ENCODE measurements at regions of chr20 and their contacts with region 1.

Region 1: GRCh38 chr20:58179432-58180099 is 48.9 kb downstream of the ANKRD60 start:
- DNase-seq: peak; percentile 20 to 90 (median 61)
- ATAC-seq: peak; percentile 88 to 96 (median 92)
- H3K4me3 ChIP-seq: peak overlapping the region in 1 of 4 donors; percentile 33
- H3K27ac ChIP-seq: no peak overlapping the region
- H3K4me1 ChIP-seq: peaks cover 0 to 8% (median 0%) of the 10 kb centered on the region in 3 donors
- H3K27me3 ChIP-seq: no peaks in the 10 kb centered on the region
- CTCF ChIP-seq: peak; percentile 98 to 99 (median 98)

Region 2: GRCh38 chr20:57622579-57623377 is 556.8 kb before region 1 on chr20:
- intact Hi-C with region 1: loop called in 1 of 3 experiments (anchors 10 kb)
- DNase-seq: peak in 5 of 6 donors; percentile 27 to 84 (median 62)
- ATAC-seq: peak; percentile 58 to 86 (median 76)
- H3K4me3 ChIP-seq: no peak overlapping the region
- H3K27ac ChIP-seq: no peak overlapping the region
- H3K4me1 ChIP-seq: no peaks in the 10 kb centered on the region
- H3K27me3 ChIP-seq: no peaks in the 10 kb centered on the region
- CTCF ChIP-seq: peak; percentile 46 to 74 (median 67)

Region 3: DNA sequence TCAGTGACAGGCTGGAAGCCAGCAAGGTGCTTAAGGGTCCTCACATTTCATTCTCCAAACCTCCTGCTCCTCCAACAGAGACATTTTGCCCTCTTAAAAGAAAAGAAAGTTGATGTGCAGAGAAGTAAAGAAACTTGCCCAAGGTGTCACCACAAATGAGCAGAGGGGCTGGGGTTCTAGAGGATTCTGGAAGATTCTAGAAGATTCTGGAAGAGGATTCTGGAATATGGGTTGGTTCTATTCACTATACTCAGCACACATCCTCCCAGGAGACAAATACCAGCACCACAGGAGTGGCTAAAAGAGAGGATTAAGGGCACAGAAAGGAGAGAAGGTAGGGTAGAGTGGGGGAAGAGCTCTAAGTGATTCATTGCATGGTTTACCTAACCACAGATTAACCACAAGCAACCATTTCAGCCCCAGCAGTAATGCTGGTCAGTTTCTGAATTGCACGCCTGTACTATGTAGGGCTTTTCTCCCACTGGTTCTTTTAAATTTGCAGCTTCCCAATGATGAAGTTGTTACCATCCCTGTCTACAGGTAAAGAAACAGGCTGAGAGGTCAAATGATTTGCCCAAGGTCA is 277.2 kb before region 1 on chr20:
- intact Hi-C with region 1: no loop called
- DNase-seq: no peak
- ATAC-seq: peak in 2 of 4 donors; percentile 27 to 55
- H3K4me3 ChIP-seq: no peak overlapping the region
- H3K27ac ChIP-seq: no peak overlapping the region
- H3K4me1 ChIP-seq: peaks cover 0 to 4% (median 0%) of the 10 kb centered on the region in 3 donors
- H3K27me3 ChIP-seq: no peaks in the 10 kb centered on the region
- CTCF ChIP-seq: no peak

Region 4: DNA sequence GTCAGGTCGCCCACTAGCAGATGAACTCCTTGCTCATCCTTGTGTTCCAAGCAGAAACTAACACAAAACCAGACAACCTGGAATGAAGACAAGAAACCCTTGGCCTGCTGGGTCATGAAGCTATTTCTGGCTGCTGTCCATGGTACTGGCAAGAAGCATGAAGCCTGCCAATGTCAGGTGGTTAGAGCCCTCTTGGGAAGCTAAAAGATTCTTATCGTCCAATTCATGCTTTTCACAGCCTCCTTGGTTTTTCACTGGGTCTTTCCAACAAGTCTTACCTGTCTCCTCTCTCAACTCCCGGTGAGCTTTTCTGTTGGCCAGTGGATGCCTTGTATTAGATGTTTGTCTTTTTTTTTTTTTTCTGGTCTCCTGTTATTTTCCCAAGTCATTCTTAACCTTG is 131.4 kb before region 1 on chr20:
- intact Hi-C with region 1: no loop called
- DNase-seq: peak in 1 of 6 donors; percentile 22
- ATAC-seq: peak in 1 of 4 donors; percentile 23
- H3K4me3 ChIP-seq: no peak overlapping the region
- H3K27ac ChIP-seq: no peak overlapping the region
- H3K4me1 ChIP-seq: no peaks in the 10 kb centered on the region
- H3K27me3 ChIP-seq: no peaks in the 10 kb centered on the region
- CTCF ChIP-seq: no peak

Region 5: GRCh38 chr20:58112017-58112781 is 67.4 kb before region 1 on chr20:
- intact Hi-C with region 1: no loop called
- DNase-seq: no peak
- ATAC-seq: peak in 2 of 4 donors; percentile 30 to 57
- H3K4me3 ChIP-seq: no peak overlapping the region
- H3K27ac ChIP-seq: no peak overlapping the region
- H3K4me1 ChIP-seq: no peaks in the 10 kb centered on the region
- H3K27me3 ChIP-seq: no peaks in the 10 kb centered on the region
- CTCF ChIP-seq: no peak

Region 6: DNA sequence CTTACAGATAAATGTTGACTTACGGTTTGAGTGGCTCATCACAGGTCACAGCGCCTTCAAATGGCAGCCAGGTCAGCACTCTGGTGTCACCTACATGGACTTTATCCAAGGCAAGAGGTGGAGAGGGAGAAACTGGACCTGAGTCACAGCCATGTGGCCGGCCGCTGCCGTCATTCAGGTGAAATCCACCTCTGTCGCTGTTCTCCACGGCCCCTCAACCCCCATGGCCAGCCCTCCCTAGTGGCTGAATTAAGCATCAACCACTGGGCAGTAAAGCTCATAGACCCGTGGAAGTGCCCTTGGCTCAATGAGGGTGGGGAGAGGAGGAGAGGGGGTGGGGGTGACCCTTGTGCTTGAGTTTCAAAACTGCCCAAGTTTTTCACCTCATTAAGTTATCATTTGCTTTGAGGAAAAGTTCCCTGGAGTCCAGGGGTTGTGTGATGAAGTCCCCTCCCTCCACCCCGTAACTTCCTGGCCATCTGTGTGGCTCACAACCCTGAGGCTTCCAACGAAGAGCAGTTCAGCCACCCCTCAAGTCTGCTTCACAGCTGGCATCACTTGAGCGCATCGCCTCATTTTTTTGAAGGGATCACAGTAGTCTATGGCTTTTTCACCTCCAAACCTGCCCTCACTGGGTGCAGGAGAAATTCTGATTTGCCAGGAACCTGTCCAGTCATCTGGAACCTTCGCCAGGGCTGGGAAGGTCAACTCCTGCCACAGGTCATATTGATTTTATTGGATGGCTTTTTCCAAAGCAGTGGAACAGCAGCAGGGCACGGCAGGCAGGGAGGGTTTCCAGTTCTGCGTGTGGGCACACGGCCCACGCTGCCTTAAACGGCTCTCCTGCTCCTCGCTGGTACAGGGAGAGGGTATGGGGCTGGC is 379.2 kb after region 1 on chr20:
- intact Hi-C with region 1: no loop called
- DNase-seq: no peak
- ATAC-seq: peak in 1 of 4 donors; percentile 46
- H3K4me3 ChIP-seq: no peak overlapping the region
- H3K27ac ChIP-seq: no peak overlapping the region
- H3K4me1 ChIP-seq: no peaks in the 10 kb centered on the region
- H3K27me3 ChIP-seq: no peaks in the 10 kb centered on the region
- CTCF ChIP-seq: no peak